PC-9 (cell line): ENCODE measurements at regions of chr15 and their contacts with region 1.

Region 1: DNA sequence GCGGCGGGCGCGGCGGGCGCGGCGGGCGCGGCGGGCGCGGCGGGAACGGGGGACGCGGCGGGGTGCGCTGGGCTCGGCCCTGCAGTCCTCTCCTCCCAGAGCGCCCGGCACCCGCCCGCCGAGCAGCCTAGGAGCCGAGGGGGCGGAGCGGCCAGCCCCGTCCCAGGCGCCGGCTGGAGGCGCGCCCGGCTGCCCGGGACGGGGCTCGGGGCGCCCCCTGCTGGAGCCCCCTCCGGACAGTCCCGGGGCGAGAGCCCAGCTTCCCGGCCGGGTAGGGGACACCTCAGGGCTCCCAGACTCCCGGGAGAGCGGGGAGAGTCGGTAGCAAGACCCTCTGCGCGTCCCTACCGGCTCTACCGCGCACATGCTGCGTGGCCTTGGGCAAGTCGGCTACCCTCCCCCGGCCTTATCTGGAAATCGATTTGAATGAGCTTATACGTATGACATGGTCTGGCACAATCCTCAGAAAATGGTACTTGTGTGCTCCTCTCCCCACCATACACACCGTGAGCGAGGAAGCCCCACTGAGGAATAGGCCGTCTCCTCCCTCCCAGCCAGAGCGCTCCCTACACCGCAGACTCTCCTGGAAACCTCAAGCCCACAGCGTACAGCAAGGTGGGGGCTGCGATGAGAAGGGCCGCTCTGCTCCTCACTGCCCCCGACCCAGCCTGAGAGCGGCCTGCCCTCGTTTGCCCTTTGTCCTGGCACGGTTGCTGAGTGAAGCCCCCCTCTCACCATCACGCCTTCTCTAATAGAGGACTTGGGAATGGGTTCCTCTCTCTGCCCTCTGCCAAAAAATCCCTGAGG is at the start of gene DAPK2:
- DNase-seq: peak; percentile 40 to 83
- H3K4me3 ChIP-seq: peak within 1 kb of the TSS; percentile 51; the same call in 1 of the 2 replicates
- H3K27ac ChIP-seq: no peak within 1 kb of the TSS
- H3K4me1 ChIP-seq: peaks cover 7% of the 10 kb centered on the region; the same call in 1 of the 2 replicates
- H3K27me3 ChIP-seq: no peaks in the 10 kb centered on the region
- CTCF ChIP-seq: peak; percentile 65
- total RNA-seq, gene DAPK2: 11.0 and 19.6 TPM in 2 replicates

Region 2: GRCh38 chr15:63752075-63752684 is 294.4 kb before region 1 on chr15:
- CTCF ChIA-PET with region 1: interaction called, 4 read pairs
- POLR2A ChIA-PET with region 1: no interaction called
- intact Hi-C with region 1: loop called (anchors 5 kb)
- DNase-seq: peak in 1 of 2 experiments; percentile 11
- H3K4me3 ChIP-seq: no peak overlapping the region
- H3K27ac ChIP-seq: no peak overlapping the region
- H3K4me1 ChIP-seq: no peaks in the 10 kb centered on the region
- H3K27me3 ChIP-seq: no peaks in the 10 kb centered on the region
- CTCF ChIP-seq: peak; percentile 73

Region 3: DNA sequence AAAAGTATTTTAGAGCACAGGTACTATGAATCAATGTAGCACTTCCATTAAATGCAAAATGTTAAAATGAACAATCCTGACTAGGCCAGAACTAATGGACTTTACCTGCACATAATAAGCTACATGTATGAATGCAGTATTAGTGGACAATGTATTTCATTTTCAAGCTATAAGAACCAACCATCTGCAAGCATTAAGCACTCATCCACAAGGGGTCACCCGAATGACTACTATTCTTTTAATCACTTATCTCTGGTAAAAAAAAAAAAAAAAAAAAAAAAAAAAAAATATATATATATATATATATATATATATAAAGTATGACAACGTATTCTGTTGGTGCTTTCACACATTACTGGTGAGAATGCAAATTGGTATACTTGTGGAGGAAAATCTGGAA is 220.0 kb before region 1 on chr15:
- CTCF ChIA-PET with region 1: no interaction called
- POLR2A ChIA-PET with region 1: no interaction called
- intact Hi-C with region 1: loop called (anchors 5 kb)
- DNase-seq: no peak
- H3K4me3 ChIP-seq: no peak overlapping the region
- H3K27ac ChIP-seq: no peak overlapping the region
- H3K4me1 ChIP-seq: no peaks in the 10 kb centered on the region
- H3K27me3 ChIP-seq: no peaks in the 10 kb centered on the region
- CTCF ChIP-seq: peak; percentile 38

Region 4: GRCh38 chr15:63896336-63897115 is 150.0 kb before region 1 on chr15:
- CTCF ChIA-PET with region 1: no interaction called
- POLR2A ChIA-PET with region 1: no interaction called
- intact Hi-C with region 1: loop called (anchors 2 kb)
- DNase-seq: peak; percentile 75 to 76
- H3K4me3 ChIP-seq: no peak overlapping the region
- H3K27ac ChIP-seq: peak overlapping the region; percentile 58
- H3K4me1 ChIP-seq: peaks cover 25% of the 10 kb centered on the region
- H3K27me3 ChIP-seq: no peaks in the 10 kb centered on the region
- CTCF ChIP-seq: no peak

Region 5: GRCh38 chr15:63986751-63987341 is 59.7 kb before region 1 on chr15:
- CTCF ChIA-PET with region 1: no interaction called
- POLR2A ChIA-PET with region 1: interaction called, 13 read pairs
- intact Hi-C with region 1: no loop called
- DNase-seq: peak in 1 of 2 experiments; percentile 54
- H3K4me3 ChIP-seq: no peak overlapping the region
- H3K27ac ChIP-seq: no peak overlapping the region
- H3K4me1 ChIP-seq: no peaks in the 10 kb centered on the region
- H3K27me3 ChIP-seq: no peaks in the 10 kb centered on the region
- CTCF ChIP-seq: no peak

Region 6: GRCh38 chr15:64010719-64011118 is 35.8 kb before region 1 on chr15:
- CTCF ChIA-PET with region 1: interaction called, 3 read pairs
- POLR2A ChIA-PET with region 1: interaction called, 3 read pairs
- intact Hi-C with region 1: loop called (anchors 5 kb)
- DNase-seq: peak; percentile 49 to 83
- H3K4me3 ChIP-seq: no peak overlapping the region
- H3K27ac ChIP-seq: no peak overlapping the region
- H3K4me1 ChIP-seq: peaks cover 57% of the 10 kb centered on the region
- H3K27me3 ChIP-seq: no peaks in the 10 kb centered on the region
- CTCF ChIP-seq: no peak

Region 7: DNA sequence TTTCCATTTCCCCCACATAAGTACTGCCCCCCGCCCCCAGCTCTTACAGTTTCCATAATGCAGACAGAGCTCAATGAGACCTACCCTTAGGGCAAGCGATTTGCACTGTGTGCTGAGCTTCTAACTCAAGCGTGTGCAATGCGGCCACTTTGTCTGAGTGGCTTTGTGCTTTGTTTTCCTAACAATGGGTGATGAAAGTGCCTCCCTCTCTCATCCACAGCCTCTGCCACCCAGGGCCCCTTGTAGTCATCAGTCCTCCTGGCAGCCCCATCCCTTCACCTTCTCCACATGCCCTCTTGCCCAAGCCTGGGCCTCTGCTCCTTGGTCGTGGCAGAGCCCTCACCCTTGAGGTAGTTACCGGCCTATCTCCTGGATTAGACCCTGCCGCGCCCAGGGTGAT is 17.4 kb before region 1 on chr15:
- CTCF ChIA-PET with region 1: interaction called, 6 read pairs
- POLR2A ChIA-PET with region 1: interaction called, 18 read pairs
- intact Hi-C with region 1: no loop called
- DNase-seq: no peak
- H3K4me3 ChIP-seq: no peak overlapping the region
- H3K27ac ChIP-seq: no peak overlapping the region
- H3K4me1 ChIP-seq: peaks cover 21% of the 10 kb centered on the region
- H3K27me3 ChIP-seq: no peaks in the 10 kb centered on the region
- CTCF ChIP-seq: no peak

Region 8: GRCh38 chr15:64067564-64068030 is 21.0 kb after region 1 on chr15:
- CTCF ChIA-PET with region 1: no interaction called
- POLR2A ChIA-PET with region 1: no interaction called
- intact Hi-C with region 1: no loop called
- DNase-seq: peak in 1 of 2 experiments; percentile 59
- H3K4me3 ChIP-seq: no peak overlapping the region
- H3K27ac ChIP-seq: no peak overlapping the region
- H3K4me1 ChIP-seq: no peaks in the 10 kb centered on the region
- H3K27me3 ChIP-seq: no peaks in the 10 kb centered on the region
- CTCF ChIP-seq: peak; percentile 80